ENCODE measurements at regions of chr5 and their contacts with region 1.

Region 1: GRCh38 chr5:75498208-75498777 is 13.1 kb downstream of the CERT1 start:
- DNase-seq: no peak
- ATAC-seq: no peak
- H3K4me3 ChIP-seq: no peak overlapping the region
- H3K27ac ChIP-seq: no peak overlapping the region
- H3K4me1 ChIP-seq: no peaks in the 10 kb centered on the region
- H3K27me3 ChIP-seq: no peaks in the 10 kb centered on the region
- CTCF ChIP-seq: no peak
- EP300 ChIP-seq: no peak
- POLR2A ChIP-seq: no peak
- RAD21 ChIP-seq: no peak

Region 2: GRCh38 chr5:75331095-75332090 is 166.9 kb before region 1 on chr5:
- CTCF ChIA-PET with region 1: no interaction called
- POLR2A ChIA-PET with region 1: no interaction called
- RAD21 ChIA-PET with region 1: no interaction called
- SMC1A ChIA-PET with region 1: no interaction called
- in situ Hi-C with region 1: no loop called
- intact Hi-C with region 1: no loop called
- DNase-seq: no peak
- ATAC-seq: no peak
- H3K4me3 ChIP-seq: no peak overlapping the region
- H3K27ac ChIP-seq: no peak overlapping the region
- H3K4me1 ChIP-seq: no peaks in the 10 kb centered on the region
- H3K27me3 ChIP-seq: no peaks in the 10 kb centered on the region
- CTCF ChIP-seq: peak in 2 of 3 experiments; percentile 23 to 28; a peak in 2 of 6 replicates
- EP300 ChIP-seq: no peak
- POLR2A ChIP-seq: no peak
- RAD21 ChIP-seq: no peak

Region 3: DNA sequence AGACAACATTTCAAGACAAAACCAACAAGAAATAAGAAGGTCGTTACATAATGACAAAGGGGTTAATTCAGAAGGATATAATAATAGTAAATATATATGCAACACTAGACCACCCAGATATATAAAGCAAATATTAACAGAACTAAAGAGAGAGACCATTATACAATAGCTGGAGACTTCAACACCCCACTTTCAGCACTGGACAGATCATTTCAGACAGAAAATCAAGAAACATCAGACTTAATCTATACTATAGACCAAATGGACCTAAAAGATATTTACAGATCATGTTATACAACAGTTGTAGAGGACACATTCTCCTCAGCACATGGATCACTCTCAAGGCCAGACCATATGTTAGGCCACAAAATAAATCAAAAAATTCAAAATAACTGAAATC is 13.7 kb before region 1 on chr5:
- CTCF ChIA-PET with region 1: no interaction called
- POLR2A ChIA-PET with region 1: no interaction called
- RAD21 ChIA-PET with region 1: no interaction called
- SMC1A ChIA-PET with region 1: no interaction called
- in situ Hi-C with region 1: no loop called
- intact Hi-C with region 1: loop called (anchors 1 kb)
- DNase-seq: no peak
- ATAC-seq: no peak
- H3K4me3 ChIP-seq: no peak overlapping the region
- H3K27ac ChIP-seq: no peak overlapping the region
- H3K4me1 ChIP-seq: no peaks in the 10 kb centered on the region
- H3K27me3 ChIP-seq: no peaks in the 10 kb centered on the region
- CTCF ChIP-seq: no peak
- EP300 ChIP-seq: no peak
- POLR2A ChIP-seq: no peak
- RAD21 ChIP-seq: no peak

Measured in GM12878 (cell line).